ENCODE measurements at regions of chr4 and their contacts with region 1.

Region 1: GRCh38 chr4:6709230-6710114 is at the start of gene MRFAP1L1:
- DNase-seq: peak; percentile 91 to 98 (median 97)
- ATAC-seq: peak; percentile 99
- H3K4me3 ChIP-seq: peak within 1 kb of the TSS; percentile 93
- H3K4me3 Mint-ChIP-seq: peak within 1 kb of the TSS; percentile 96 to 100 (median 98)
- H3K27ac ChIP-seq: peak within 1 kb of the TSS; percentile 86
- H3K27ac Mint-ChIP-seq: peak within 1 kb of the TSS; percentile 95 to 99 (median 98)
- H3K4me1 ChIP-seq: peaks cover 38 to 48% of the 10 kb centered on the region in 2 donors
- H3K4me1 Mint-ChIP-seq: peaks cover 45 to 71% (median 65%) of the 10 kb centered on the region in 7 donors
- H3K27me3 ChIP-seq: no peaks in the 10 kb centered on the region
- H3K27me3 Mint-ChIP-seq: peaks cover 0 to 8% (median 0%) of the 10 kb centered on the region in 5 donors
- total RNA-seq, gene MRFAP1L1: 24.8 to 124 (median 73.6) TPM

Region 2: DNA sequence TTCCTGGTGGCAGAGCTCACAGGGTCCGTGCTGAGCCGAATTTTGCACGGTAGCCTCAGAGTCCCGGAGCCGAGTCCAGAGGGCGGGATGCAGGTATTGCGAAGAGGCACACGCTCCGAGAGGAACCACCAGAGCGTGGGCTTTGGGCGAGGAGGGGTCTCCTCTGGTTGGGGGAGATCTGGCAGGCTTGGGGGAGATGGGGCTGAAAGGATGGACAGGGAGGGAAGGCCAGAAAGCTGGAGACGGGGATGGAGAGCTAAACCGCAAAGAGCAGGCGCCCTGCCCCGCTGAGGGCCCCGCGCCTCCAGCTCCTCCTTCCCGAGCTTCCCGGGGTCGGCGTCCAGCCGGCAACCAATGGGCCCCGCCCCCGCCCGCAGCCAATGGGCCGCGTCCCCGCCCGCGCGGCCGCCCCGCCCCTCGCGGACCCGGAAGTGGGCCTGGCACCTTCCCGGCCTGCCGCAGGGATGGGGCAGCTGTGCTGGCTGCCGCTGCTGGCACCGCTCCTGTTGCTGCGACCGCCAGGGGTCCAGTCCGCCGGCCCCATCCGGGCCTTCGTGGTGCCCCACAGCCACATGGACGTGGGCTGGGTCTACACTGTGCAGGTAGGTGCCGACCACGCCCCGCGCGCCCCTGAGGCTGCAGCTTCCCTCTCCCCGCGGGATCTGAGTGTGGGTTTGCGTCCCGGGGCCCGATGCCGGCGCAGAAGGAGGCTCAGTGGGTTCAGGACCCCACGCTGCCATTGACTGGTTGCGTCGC is 134.5 kb before region 1 on chr4 and contains the start of gene MAN2B2:
- CTCF ChIA-PET with region 1: no interaction called
- POLR2A ChIA-PET with region 1: no interaction called
- intact Hi-C with region 1: loop called (anchors 2 kb)
- DNase-seq: peak; percentile 68 to 92 (median 75)
- ATAC-seq: peak; percentile 96
- H3K4me3 ChIP-seq: peak within 1 kb of the TSS; percentile 92
- H3K4me3 Mint-ChIP-seq: peak within 1 kb of the TSS; percentile 84 to 94 (median 90)
- H3K27ac ChIP-seq: peak within 1 kb of the TSS; percentile 83
- H3K27ac Mint-ChIP-seq: peak within 1 kb of the TSS; percentile 68 to 91 (median 84)
- H3K4me1 ChIP-seq: peaks cover 5 to 9% of the 10 kb centered on the region in 2 donors
- H3K4me1 Mint-ChIP-seq: peaks cover 6 to 13% (median 8%) of the 10 kb centered on the region in 7 donors
- H3K27me3 ChIP-seq: no peaks in the 10 kb centered on the region
- H3K27me3 Mint-ChIP-seq: peaks cover 0 to 17% (median 0%) of the 10 kb centered on the region in 5 donors
- total RNA-seq, gene MAN2B2: 28.7 to 56.2 (median 39.4) TPM

Region 3: GRCh38 chr4:6681187-6681586 is 28.3 kb before region 1 on chr4:
- CTCF ChIA-PET with region 1: interaction called, 44 read pairs
- POLR2A ChIA-PET with region 1: interaction called, 696 read pairs
- intact Hi-C with region 1: no loop called
- DNase-seq: no peak
- ATAC-seq: no peak
- H3K4me3 ChIP-seq: no peak overlapping the region
- H3K4me3 Mint-ChIP-seq: no peak overlapping the region
- H3K27ac ChIP-seq: no peak overlapping the region
- H3K27ac Mint-ChIP-seq: peak overlapping the region in 5 of 9 donors; percentile 28 to 70 (median 51)
- H3K4me1 ChIP-seq: peaks cover 16 to 24% of the 10 kb centered on the region in 2 donors
- H3K4me1 Mint-ChIP-seq: peaks cover 19 to 50% (median 38%) of the 10 kb centered on the region in 7 donors
- H3K27me3 ChIP-seq: no peaks in the 10 kb centered on the region
- H3K27me3 Mint-ChIP-seq: no peaks in the 10 kb centered on the region

Region 4: DNA sequence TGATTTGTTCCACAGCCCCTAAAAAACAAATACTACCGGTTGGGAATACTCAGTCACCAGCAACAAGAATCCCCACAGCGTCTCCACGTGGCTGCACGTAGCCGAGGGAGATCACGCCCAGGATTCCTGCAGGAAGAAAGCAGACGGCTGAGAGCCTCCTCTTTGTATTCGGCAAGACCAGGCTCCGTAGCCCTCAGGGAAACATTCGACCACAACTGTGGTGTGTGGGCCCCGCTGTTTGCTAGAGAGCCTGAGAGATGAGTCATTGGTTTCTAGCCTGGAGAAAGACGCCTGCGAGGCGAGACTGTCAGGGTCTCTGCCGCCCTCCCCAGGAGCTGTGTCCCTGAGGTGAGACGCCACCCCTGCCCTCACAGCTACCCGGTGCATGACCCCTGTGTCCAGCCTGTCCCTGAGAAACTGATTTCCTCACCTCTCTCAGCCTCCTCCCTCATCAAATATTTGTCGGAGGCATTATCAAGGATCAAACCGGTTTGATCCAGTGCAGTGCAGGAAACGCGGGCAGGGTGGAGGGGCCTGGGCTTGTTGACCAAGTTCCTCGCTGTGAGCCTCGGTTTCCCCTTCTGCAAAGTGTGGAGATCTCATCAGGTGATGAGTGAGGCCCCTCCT is 20.5 kb before region 1 on chr4:
- CTCF ChIA-PET with region 1: interaction called, 3 read pairs
- POLR2A ChIA-PET with region 1: interaction called, 552 read pairs
- intact Hi-C with region 1: loop called (anchors 1 kb)
- DNase-seq: peak in 3 of 9 donors; percentile 18 to 79 (median 62)
- ATAC-seq: peak; percentile 79
- H3K4me3 ChIP-seq: peak overlapping the region; percentile 43
- H3K4me3 Mint-ChIP-seq: peak overlapping the region in 9 of 10 donors; percentile 16 to 92 (median 66)
- H3K27ac ChIP-seq: peak overlapping the region; percentile 61
- H3K27ac Mint-ChIP-seq: peak overlapping the region; percentile 93 to 99 (median 96)
- H3K4me1 ChIP-seq: peaks cover 53 to 66% of the 10 kb centered on the region in 2 donors
- H3K4me1 Mint-ChIP-seq: peaks cover 38 to 82% (median 64%) of the 10 kb centered on the region in 7 donors
- H3K27me3 ChIP-seq: no peaks in the 10 kb centered on the region
- H3K27me3 Mint-ChIP-seq: no peaks in the 10 kb centered on the region

Region 5: GRCh38 chr4:6695660-6696630 is 13.5 kb before region 1 on chr4:
- CTCF ChIA-PET with region 1: interaction called, 9 read pairs
- POLR2A ChIA-PET with region 1: interaction called, 552 read pairs
- intact Hi-C with region 1: loop called in 1 of 2 experiments (anchors 1 kb)
- DNase-seq: peak in 8 of 9 donors; percentile 53 to 82 (median 75)
- ATAC-seq: peak; percentile 89
- H3K4me3 ChIP-seq: peak overlapping the region; percentile 17
- H3K4me3 Mint-ChIP-seq: peak overlapping the region; percentile 42 to 84 (median 74)
- H3K27ac ChIP-seq: peak overlapping the region; percentile 77
- H3K27ac Mint-ChIP-seq: peak overlapping the region; percentile 93 to 99 (median 97)
- H3K4me1 ChIP-seq: peaks cover 84 to 85% of the 10 kb centered on the region in 2 donors
- H3K4me1 Mint-ChIP-seq: peaks cover 59 to 89% (median 82%) of the 10 kb centered on the region in 7 donors
- H3K27me3 ChIP-seq: no peaks in the 10 kb centered on the region
- H3K27me3 Mint-ChIP-seq: no peaks in the 10 kb centered on the region

Measured in naive thymus-derived CD4-positive, alpha-beta T cell (primary cell).